Calu3 (cell line): ENCODE measurements at regions of chr11 and their contacts with region 1.

Region 1: GRCh38 chr11:59999691-60000090 is 17.3 kb upstream of the OOSP4B start:
- DNase-seq: no peak
- H3K4me3 Mint-ChIP-seq: no peak overlapping the region
- H3K27ac Mint-ChIP-seq: no peak overlapping the region
- H3K4me1 Mint-ChIP-seq: no peaks in the 10 kb centered on the region
- H3K27me3 Mint-ChIP-seq: no peaks in the 10 kb centered on the region
- CTCF ChIP-seq: no peak

Region 2: DNA sequence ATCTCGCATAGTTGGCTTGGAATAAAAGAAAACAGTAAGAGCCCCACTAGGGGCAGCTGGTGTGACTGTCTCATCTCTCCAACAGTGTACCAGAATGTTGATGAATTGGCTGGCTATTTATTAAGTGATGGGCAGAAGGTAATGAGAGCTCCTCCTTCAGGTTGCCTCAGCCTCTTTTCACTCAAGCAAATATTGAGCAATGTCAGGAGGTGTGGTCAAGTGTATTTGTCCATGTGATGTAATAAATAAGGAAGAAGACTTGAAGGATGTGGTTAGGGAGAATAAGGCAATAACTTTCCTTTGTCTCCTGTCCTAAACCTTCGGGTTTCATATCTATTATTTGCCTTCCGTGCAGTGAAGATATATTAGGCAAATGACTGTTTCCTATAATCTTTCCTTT is 133.3 kb before region 1 on chr11 and contains the start of gene TCN1:
- CTCF ChIA-PET with region 1: no interaction called
- intact Hi-C with region 1: no loop called
- DNase-seq: peak; percentile 71
- H3K4me3 Mint-ChIP-seq: peak within 1 kb of the TSS; percentile 69
- H3K27ac Mint-ChIP-seq: peak within 1 kb of the TSS; percentile 92
- H3K4me1 Mint-ChIP-seq: peaks cover 18% of the 10 kb centered on the region
- H3K27me3 Mint-ChIP-seq: no peaks in the 10 kb centered on the region
- CTCF ChIP-seq: no peak
- total RNA-seq, gene TCN1: 335 and 428 TPM in 2 replicates

Region 3: DNA sequence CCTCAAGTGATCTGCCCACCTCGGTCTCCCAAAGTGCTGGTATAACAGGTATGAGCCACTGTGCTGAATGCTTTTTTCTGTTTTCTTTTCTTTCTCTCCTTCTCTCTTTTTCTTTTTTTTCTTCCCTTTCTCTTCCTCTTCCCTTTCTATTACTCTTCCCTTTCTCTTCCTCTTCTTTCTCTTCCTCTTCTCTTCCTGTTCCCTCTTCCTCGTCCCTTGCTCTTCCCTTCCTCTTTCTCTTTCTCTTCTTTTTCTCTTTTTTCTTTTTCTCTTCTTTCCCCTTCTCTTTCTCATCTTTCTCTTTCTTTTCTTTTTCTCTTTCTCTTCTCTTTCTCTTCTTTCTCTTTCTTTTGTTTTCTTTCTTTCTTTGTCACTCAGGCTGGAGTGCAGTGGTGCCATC is 60.2 kb before region 1 on chr11:
- CTCF ChIA-PET with region 1: no interaction called
- intact Hi-C with region 1: no loop called
- DNase-seq: no peak
- H3K4me3 Mint-ChIP-seq: no peak overlapping the region
- H3K27ac Mint-ChIP-seq: no peak overlapping the region
- H3K4me1 Mint-ChIP-seq: no peaks in the 10 kb centered on the region
- H3K27me3 Mint-ChIP-seq: no peaks in the 10 kb centered on the region
- CTCF ChIP-seq: no peak

Region 4: DNA sequence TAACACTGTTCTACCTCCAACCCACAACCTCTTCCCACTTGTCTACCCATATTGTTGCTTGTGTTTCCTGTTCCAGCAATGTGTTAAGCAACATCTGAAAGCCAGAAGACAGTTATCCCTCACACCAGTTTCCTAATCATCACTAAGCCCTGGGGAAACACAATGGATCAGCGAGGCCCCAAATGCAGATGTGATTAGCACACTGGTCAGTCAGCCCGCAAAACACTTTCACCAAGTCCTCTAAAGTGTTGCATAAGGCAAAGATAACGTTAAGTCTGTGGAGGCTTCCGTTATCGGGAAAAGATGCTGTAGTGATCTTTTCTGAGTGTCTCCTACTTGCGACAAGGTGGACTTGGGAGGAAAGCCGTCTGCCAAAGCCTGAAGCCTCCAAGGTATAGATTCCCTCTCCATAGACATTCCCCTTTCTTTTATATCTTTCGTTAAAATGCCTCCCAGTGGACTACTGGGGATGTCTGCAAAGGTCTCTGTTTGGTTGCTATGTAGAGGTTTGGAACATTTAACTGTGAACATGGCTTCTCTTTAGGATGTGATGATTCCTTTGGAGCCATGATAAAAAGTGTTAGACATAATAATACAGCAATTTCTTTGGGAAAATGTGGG is 56.8 kb after region 1 on chr11 and contains the start of gene MS4A3:
- CTCF ChIA-PET with region 1: no interaction called
- intact Hi-C with region 1: loop called (anchors 5 kb)
- DNase-seq: no peak
- H3K4me3 Mint-ChIP-seq: no peak within 1 kb of the TSS
- H3K27ac Mint-ChIP-seq: no peak within 1 kb of the TSS
- H3K4me1 Mint-ChIP-seq: peaks cover 17% of the 10 kb centered on the region
- H3K27me3 Mint-ChIP-seq: no peaks in the 10 kb centered on the region
- CTCF ChIP-seq: no peak
- total RNA-seq, gene MS4A3: not detected in 2 replicates